IMR-90 (cell line): ENCODE measurements at regions of chr15 and their contacts with region 1.

Region 1: GRCh38 chr15:101014921-101015841 is 96.0 kb downstream of the LRRK1 start:
- DNase-seq: peak; percentile 70
- ATAC-seq: peak; percentile 83
- H3K4me3 ChIP-seq: no peak overlapping the region
- H3K27ac ChIP-seq: no peak overlapping the region
- H3K4me1 ChIP-seq: peaks cover 7% of the 10 kb centered on the region; the same call in 1 of the 2 replicates
- H3K27me3 ChIP-seq: no peaks in the 10 kb centered on the region
- CTCF ChIP-seq: peak; percentile 95
- POLR2A ChIP-seq: peak; percentile 55
- RAD21 ChIP-seq: peak; percentile 98

Region 2: DNA sequence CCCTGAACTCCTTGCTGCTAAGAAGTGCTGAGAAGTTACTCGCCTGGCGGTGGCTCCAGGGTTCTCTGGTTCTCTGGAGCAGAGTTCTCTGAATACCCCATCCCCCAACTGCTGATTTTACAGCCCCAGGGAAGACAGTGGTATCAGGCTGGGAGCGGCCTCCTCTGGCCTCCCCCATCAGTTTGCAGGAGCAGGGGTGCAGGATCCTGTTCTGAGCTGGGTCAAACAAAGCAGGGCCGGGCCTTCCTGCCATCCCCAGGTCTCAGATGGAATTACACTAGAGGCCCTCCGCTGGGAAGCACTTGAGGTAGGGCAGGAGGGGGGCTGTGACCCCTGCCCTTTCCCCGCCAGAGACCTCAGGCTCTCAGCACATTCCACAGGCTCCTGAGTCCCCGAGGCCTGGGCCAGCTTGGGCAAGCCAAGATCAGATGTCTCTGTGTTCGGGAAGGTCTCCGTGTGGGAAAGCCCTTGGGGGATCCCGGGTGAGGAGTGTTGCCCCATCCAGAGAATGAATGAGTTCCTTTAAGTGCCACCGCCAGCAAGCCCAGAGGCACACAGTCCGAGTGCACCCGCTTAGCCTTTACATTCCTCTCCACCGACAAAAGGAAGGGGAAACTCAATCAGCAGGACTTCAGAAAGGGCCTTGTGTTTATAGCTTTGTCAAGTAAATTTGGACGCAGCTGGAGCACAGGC is 53.9 kb after region 1 on chr15:
- CTCF ChIA-PET with region 1: interaction called, 3 read pairs
- POLR2A ChIA-PET with region 1: no interaction called
- dilution Hi-C with region 1: no loop called
- in situ Hi-C with region 1: no loop called
- intact Hi-C with region 1: loop called (anchors 1 kb)
- DNase-seq: peak; percentile 61
- ATAC-seq: peak; percentile 77
- H3K4me3 ChIP-seq: no peak overlapping the region
- H3K27ac ChIP-seq: peak overlapping the region; percentile 68
- H3K4me1 ChIP-seq: peaks cover 29% of the 10 kb centered on the region
- H3K27me3 ChIP-seq: no peaks in the 10 kb centered on the region
- CTCF ChIP-seq: 0 out of 2 replicates have a peak, but pooled peaks have one; percentile 19
- POLR2A ChIP-seq: no peak
- RAD21 ChIP-seq: no peak

Region 3: DNA sequence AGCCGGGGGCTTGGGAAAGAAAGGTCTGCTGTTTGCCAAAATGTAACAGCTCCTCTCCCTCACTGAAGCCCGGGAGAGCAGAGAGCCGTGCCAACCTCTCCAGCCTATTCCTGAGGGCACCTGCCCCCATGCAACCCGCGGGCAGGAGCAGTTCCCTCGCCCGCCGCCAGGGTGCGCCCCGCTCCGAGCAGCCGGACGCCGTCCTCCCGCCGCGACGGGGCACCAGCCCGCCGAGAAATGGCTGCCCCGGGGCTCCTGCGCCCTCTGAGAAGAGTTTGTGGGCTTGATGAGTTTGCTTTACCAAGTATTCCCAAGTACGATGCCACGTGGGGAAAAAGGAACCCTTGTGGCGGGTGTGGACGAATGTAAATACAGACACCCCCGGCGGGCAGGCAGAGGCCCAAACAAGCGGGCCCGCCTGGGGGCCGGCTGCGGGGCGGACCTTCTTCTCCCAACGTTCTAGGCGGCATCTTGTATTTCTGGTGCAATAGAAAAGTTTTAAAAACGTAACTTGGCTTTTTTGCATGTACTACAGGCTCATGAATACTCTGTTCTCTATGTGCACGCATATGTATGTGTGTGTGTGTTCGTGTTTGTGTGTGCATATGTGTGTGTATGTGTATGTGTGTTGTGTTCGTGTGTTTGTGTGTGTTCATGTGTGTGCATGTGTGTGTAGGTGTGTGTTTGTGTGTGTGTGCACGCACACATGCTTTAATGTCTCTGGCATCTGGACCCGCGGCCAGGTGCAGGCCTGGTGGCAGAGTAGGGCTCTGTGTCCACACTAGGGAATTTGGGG is 73.8 kb after region 1 on chr15:
- CTCF ChIA-PET with region 1: interaction called, 3 read pairs
- POLR2A ChIA-PET with region 1: no interaction called
- dilution Hi-C with region 1: no loop called
- in situ Hi-C with region 1: no loop called
- intact Hi-C with region 1: loop called (anchors 5 kb)
- DNase-seq: no peak
- ATAC-seq: peak; percentile 93
- H3K4me3 ChIP-seq: no peak overlapping the region
- H3K27ac ChIP-seq: no peak overlapping the region
- H3K4me1 ChIP-seq: peaks cover 15% of the 10 kb centered on the region
- H3K27me3 ChIP-seq: no peaks in the 10 kb centered on the region
- CTCF ChIP-seq: peak; percentile 95
- POLR2A ChIP-seq: peak; percentile 40; the same call in 1 of the 2 replicates
- RAD21 ChIP-seq: peak; percentile 93

Region 4: GRCh38 chr15:101188637-101189408 is 173.6 kb after region 1 on chr15:
- CTCF ChIA-PET with region 1: no interaction called
- POLR2A ChIA-PET with region 1: no interaction called
- dilution Hi-C with region 1: no loop called
- in situ Hi-C with region 1: no loop called
- intact Hi-C with region 1: loop called (anchors 5 kb)
- DNase-seq: peak; percentile 91
- ATAC-seq: peak; percentile 47
- H3K4me3 ChIP-seq: peak overlapping the region; percentile 38
- H3K27ac ChIP-seq: peak overlapping the region; percentile 100
- H3K4me1 ChIP-seq: peaks cover 37% of the 10 kb centered on the region
- H3K27me3 ChIP-seq: no peaks in the 10 kb centered on the region
- CTCF ChIP-seq: no peak
- POLR2A ChIP-seq: peak; percentile 72
- RAD21 ChIP-seq: no peak; the same call in 1 of the 2 replicates

Region 5: GRCh38 chr15:101258238-101259144 is 243.3 kb after region 1 on chr15:
- CTCF ChIA-PET with region 1: interaction called, 17 read pairs
- POLR2A ChIA-PET with region 1: no interaction called
- dilution Hi-C with region 1: no loop called
- in situ Hi-C with region 1: loop called (anchors 5 kb)
- intact Hi-C with region 1: loop called (anchors 1 kb)
- DNase-seq: peak; percentile 80
- ATAC-seq: peak; percentile 83
- H3K4me3 ChIP-seq: no peak overlapping the region
- H3K27ac ChIP-seq: no peak overlapping the region
- H3K4me1 ChIP-seq: peaks cover 10% of the 10 kb centered on the region
- H3K27me3 ChIP-seq: no peaks in the 10 kb centered on the region
- CTCF ChIP-seq: peak; percentile 97
- POLR2A ChIP-seq: peak; percentile 25; the same call in 1 of the 2 replicates
- RAD21 ChIP-seq: peak; percentile 97

Region 6: GRCh38 chr15:101641166-101641764 is 626.1 kb after region 1 on chr15:
- CTCF ChIA-PET with region 1: no interaction called
- POLR2A ChIA-PET with region 1: no interaction called
- dilution Hi-C with region 1: no loop called
- in situ Hi-C with region 1: no loop called
- intact Hi-C with region 1: loop called (anchors 10 kb)
- DNase-seq: peak; percentile 73
- ATAC-seq: peak; percentile 76
- H3K4me3 ChIP-seq: no peak overlapping the region
- H3K27ac ChIP-seq: no peak overlapping the region
- H3K4me1 ChIP-seq: peaks cover 3% of the 10 kb centered on the region
- H3K27me3 ChIP-seq: no peaks in the 10 kb centered on the region
- CTCF ChIP-seq: peak; percentile 98
- POLR2A ChIP-seq: no peak
- RAD21 ChIP-seq: peak; percentile 92